K562 (cell line): ENCODE measurements at regions of chr3 and their contacts with region 1.

Region 1: DNA sequence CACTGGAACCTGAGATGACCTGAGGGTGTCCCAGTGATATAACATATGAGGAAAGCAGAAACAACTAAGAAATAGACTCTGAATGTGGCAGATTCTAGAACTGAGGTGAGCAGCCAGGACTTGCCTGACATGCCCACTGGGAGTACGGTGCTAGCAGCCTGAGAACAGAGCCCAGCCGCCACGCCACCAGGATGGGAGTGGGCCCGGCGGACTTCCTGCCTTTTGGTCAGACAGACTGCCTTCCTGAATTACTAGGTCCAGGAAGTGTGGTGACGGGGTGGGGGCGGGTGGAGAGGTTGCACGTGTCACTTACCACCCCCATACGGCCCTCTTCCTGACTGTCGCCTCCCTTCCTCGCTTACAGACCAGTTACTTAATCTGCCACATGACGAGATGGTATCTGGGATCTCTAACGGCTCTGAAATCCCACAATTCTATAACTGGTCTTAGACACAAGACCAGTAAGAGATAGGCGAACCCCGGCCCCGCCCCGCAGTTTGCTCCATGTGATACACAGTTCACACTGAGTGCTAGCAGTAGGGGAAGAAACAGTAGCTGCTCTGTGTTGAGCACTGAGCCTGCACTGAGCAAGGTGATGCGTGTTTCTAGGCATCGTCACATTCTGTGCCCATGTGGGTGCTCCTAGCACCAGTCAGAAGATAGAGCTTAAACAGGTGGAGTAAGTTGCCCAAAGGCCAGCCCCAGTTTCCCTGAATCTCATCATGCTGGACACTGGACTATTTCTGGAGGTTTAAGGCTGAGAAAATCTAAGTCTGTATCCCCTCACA is 95.7 kb downstream of the CPN2 start:
- DNase-seq: peak; percentile 92 to 98 (median 94)
- ATAC-seq: peak; percentile 96
- H3K4me3 ChIP-seq: peak overlapping the region; percentile 26
- H3K27ac ChIP-seq: peak overlapping the region; percentile 98
- H3K4me1 ChIP-seq: peaks cover 42 to 48% of the 10 kb centered on the region in 2 experiments
- H3K27me3 ChIP-seq: no peaks in the 10 kb centered on the region; a peak in 1 of 5 replicates
- CTCF ChIP-seq: no peak
- EP300 ChIP-seq: peak; percentile 100
- POLR2A ChIP-seq: peak; percentile 88
- RAD21 ChIP-seq: peak in 1 of 2 experiments; percentile 34; a peak in 3 of 4 replicates

Region 2: DNA sequence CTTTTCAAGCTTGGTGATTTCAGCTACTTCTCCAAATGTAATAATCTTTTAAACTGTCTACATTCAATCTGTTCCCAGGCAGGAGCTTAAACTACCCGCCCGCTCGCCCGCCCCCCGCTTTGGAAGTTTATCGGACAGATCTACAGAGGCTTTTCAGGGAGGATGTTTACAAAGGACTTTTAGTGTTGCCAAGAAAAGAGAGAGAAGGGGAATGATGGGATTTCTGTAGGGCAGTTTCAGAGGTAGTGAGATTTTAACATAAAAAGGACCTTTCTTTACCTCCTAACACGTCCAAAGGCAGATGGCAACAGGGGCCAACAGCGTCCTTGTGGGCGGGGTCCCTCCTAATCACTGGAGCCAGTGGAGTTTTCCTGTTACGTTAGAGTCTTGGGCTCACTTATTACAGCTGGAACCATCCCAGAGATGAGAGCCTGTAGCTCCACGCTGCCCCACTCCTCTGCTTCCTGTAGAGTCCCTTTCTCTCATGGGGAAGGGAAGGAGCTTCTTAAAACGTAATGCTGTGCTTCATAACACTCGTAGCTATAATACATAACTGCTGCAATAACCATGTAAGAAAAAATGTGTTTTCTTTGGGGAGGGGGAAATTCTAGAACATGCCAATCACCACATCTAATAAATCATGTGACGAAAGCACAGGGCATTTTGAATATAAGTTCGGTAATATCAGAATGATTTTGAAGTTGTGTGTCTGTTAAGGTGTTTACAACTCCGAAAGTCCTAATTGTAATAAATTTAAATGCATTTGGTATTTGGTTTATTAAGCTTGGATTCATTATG is 88.6 kb before region 1 on chr3:
- CTCF ChIA-PET with region 1: no interaction called
- POLR2A ChIA-PET with region 1: no interaction called
- in situ Hi-C with region 1: no loop called
- intact Hi-C with region 1: loop called (anchors 2 kb)
- DNase-seq: peak; percentile 20 to 69 (median 38)
- ATAC-seq: peak; percentile 80
- H3K4me3 ChIP-seq: 0 out of 2 replicates have a peak overlapping the region, but pooled peaks have one; percentile 5
- H3K27ac ChIP-seq: peak overlapping the region; percentile 12; the same call in 1 of the 3 replicates
- H3K4me1 ChIP-seq: peaks cover 0 to 18% of the 10 kb centered on the region in 2 experiments; a peak in 4 of 5 replicates
- H3K27me3 ChIP-seq: no peaks in the 10 kb centered on the region
- CTCF ChIP-seq: no peak
- EP300 ChIP-seq: no peak; the same call in 1 of the 2 replicates
- POLR2A ChIP-seq: no peak
- RAD21 ChIP-seq: peak in 1 of 2 experiments; percentile 8; a peak in 1 of 4 replicates

Region 3: GRCh38 chr3:194231929-194232842 is 23.3 kb before region 1 on chr3:
- CTCF ChIA-PET with region 1: no interaction called
- POLR2A ChIA-PET with region 1: no interaction called
- in situ Hi-C with region 1: no loop called
- intact Hi-C with region 1: no loop called
- DNase-seq: no peak
- ATAC-seq: peak; percentile 61
- H3K4me3 ChIP-seq: no peak overlapping the region
- H3K27ac ChIP-seq: no peak overlapping the region
- H3K4me1 ChIP-seq: peaks cover 7 to 29% of the 10 kb centered on the region in 2 experiments
- H3K27me3 ChIP-seq: no peaks in the 10 kb centered on the region
- CTCF ChIP-seq: no peak
- EP300 ChIP-seq: no peak
- POLR2A ChIP-seq: no peak
- RAD21 ChIP-seq: no peak

Region 4: DNA sequence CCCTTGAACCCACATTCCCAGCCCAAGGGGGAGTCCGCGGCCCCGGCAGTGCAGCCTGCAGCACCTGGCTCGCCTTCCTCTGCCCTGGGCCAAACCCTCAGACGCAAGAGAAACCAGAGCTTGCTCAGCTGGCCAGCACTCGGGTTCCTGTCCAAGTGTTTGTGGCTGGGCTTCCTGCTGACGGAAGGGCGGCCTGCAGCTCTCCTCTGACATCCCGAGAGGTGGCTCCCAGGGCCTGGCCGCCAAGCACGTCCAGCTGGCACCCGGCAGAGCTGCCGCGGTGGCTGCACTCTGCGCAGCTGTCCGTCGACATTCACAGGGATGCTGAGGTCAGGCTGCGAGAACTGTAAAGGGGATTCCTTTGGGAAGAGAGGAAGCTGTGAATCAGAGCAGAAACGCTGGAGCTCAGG is 10.0 kb after region 1 on chr3:
- CTCF ChIA-PET with region 1: no interaction called
- POLR2A ChIA-PET with region 1: interaction called, 14 read pairs
- in situ Hi-C with region 1: no loop called
- intact Hi-C with region 1: no loop called
- DNase-seq: no peak
- ATAC-seq: no peak
- H3K4me3 ChIP-seq: no peak overlapping the region
- H3K27ac ChIP-seq: no peak overlapping the region
- H3K4me1 ChIP-seq: peaks cover 16 to 29% of the 10 kb centered on the region in 2 experiments
- H3K27me3 ChIP-seq: no peaks in the 10 kb centered on the region
- CTCF ChIP-seq: no peak
- EP300 ChIP-seq: no peak
- POLR2A ChIP-seq: no peak
- RAD21 ChIP-seq: no peak